ENCODE measurements at regions of chr17 and their contacts with region 1.

Region 1: GRCh38 chr17:16504984-16505383 is 13.0 kb upstream of the LRRC75A start:
- DNase-seq: peak in 1 of 2 experiments; percentile 38
- H3K4me3 ChIP-seq: no peak overlapping the region
- H3K4me3 Mint-ChIP-seq: peak overlapping the region; percentile 17
- H3K27ac Mint-ChIP-seq: peak overlapping the region; percentile 77
- H3K4me1 ChIP-seq: peaks cover 26% of the 10 kb centered on the region
- H3K4me1 Mint-ChIP-seq: peaks cover 40% of the 10 kb centered on the region
- H3K27me3 ChIP-seq: no peaks in the 10 kb centered on the region
- H3K27me3 Mint-ChIP-seq: no peaks in the 10 kb centered on the region
- CTCF ChIP-seq: no peak

Region 2: DNA sequence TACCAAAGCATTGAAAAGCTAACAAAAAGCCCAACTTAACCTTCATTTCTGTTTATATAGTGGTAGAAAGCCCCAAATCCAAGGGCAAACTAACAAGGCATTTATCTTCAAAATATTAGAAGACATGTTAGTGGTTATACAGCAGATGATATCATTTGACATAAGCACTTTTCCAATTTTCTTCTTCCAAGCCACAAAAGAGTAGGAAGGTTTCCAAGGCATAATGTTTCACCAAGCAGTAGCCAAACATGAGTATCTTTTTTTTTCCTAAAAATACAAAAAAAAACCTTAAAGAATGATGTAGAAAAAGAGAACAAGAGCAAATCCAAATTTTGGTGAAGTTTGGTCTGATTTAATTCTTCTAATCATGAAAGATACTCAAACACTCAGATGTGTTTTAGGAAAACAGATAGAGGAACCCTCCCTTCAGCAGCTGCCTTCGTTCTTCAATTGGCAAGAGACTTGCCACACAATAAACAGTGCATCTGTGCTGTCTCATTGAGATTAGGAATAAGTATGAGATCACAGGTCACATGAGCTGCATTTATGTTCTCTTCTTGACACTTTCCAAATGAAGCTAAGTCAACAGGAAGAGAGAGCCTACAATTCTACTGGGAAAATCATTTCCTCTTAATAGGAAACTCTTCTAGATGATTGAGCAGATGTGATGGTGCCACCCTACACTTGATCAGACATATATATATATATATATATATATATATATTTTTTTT is 398.7 kb before region 1 on chr17:
- CTCF ChIA-PET with region 1: no interaction called
- POLR2A ChIA-PET with region 1: no interaction called
- intact Hi-C with region 1: no loop called
- DNase-seq: no peak
- H3K4me3 ChIP-seq: no peak overlapping the region
- H3K4me3 Mint-ChIP-seq: no peak overlapping the region
- H3K27ac Mint-ChIP-seq: no peak overlapping the region
- H3K4me1 ChIP-seq: no peaks in the 10 kb centered on the region
- H3K4me1 Mint-ChIP-seq: peaks cover 6% of the 10 kb centered on the region
- H3K27me3 ChIP-seq: no peaks in the 10 kb centered on the region
- H3K27me3 Mint-ChIP-seq: no peaks in the 10 kb centered on the region
- CTCF ChIP-seq: no peak

Region 3: DNA sequence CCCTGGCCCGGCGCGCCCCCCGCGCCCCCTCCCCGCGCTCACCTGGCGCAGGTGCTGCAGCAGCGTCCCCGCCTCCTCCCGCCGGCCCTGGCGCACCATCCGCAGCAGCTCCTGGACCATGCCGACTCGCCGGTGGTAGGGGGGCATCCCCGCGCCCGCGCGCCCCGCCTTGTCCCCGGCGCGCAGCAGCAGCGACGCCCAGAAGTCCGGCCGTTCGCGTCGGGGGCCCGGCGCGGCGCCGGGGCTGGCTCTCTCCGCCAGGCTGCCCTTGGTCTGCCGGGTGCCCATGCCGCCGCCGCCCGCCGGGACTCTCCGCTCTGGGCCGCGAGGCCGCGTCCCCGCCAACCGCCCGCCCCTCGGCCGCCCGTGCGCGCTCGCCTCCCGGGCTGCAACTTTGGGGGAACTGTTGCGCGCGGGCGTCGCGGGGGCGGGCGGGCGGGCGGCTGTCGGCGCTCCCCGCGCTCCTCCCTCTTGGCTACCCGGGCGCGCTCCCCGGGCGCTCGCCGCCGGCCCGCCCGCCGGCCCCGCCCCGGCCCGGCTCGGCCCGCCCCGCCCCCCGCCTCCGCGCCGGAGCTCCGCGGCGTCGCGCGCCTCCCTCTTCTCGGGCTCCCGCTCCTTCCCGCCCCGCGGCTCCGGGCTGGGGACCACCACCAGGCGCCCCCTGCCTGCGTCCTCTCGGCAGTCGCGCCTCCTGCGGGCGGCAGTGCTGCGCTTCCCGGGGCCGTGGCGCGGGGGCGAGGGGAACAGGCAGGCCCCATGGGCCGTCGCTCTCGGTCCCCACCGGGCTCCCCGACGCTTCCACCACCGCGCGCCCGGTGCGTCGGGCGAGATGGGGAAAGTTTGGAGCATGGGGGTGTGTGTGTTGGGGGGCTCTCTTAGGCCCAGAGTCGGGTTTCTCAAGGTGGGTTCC is 13.0 kb before region 1 on chr17 and contains the start of gene LRRC75A:
- CTCF ChIA-PET with region 1: interaction called, 4 read pairs
- POLR2A ChIA-PET with region 1: no interaction called
- intact Hi-C with region 1: loop called (anchors 1 kb)
- DNase-seq: peak in 1 of 2 experiments; percentile 68
- H3K4me3 ChIP-seq: peak within 1 kb of the TSS; percentile 59
- H3K4me3 Mint-ChIP-seq: peak within 1 kb of the TSS; percentile 63
- H3K27ac Mint-ChIP-seq: no peak within 1 kb of the TSS
- H3K4me1 ChIP-seq: peaks cover 24% of the 10 kb centered on the region
- H3K4me1 Mint-ChIP-seq: no peaks in the 10 kb centered on the region
- H3K27me3 ChIP-seq: no peaks in the 10 kb centered on the region
- H3K27me3 Mint-ChIP-seq: peaks cover 3% of the 10 kb centered on the region
- CTCF ChIP-seq: peak in 1 of 2 experiments; percentile 44
- total RNA-seq, gene LRRC75A: 4.0 and 4.5 TPM in 2 replicates

Region 4: GRCh38 chr17:16623282-16623681 is 118.3 kb after region 1 on chr17:
- CTCF ChIA-PET with region 1: no interaction called
- POLR2A ChIA-PET with region 1: no interaction called
- intact Hi-C with region 1: no loop called
- DNase-seq: no peak
- H3K4me3 ChIP-seq: no peak overlapping the region
- H3K4me3 Mint-ChIP-seq: no peak overlapping the region
- H3K27ac Mint-ChIP-seq: no peak overlapping the region
- H3K4me1 ChIP-seq: no peaks in the 10 kb centered on the region
- H3K4me1 Mint-ChIP-seq: no peaks in the 10 kb centered on the region
- H3K27me3 ChIP-seq: no peaks in the 10 kb centered on the region
- H3K27me3 Mint-ChIP-seq: no peaks in the 10 kb centered on the region
- CTCF ChIP-seq: no peak

Measured in Caco-2 (cell line).